ENCODE measurements at regions of chr3 and their contacts with region 1.

Region 1: DNA sequence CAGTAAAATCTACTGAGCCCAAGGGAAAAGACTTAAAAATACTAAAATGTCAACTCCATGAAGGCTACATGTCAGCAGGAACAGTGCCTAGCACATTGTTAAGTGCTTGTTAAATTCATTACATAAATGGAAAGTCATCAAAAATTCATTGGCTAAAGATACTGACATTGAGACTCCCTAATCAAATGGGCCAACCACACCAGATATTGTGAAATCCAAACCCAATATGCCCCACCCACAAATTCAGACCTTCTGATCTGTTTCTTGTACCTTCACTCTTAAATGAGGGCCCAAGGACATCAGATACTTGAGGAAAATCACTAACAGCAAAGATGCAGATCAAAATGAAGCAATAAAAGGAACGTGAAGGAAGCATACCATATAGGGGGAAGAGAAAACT is 20.7 kb downstream of the MRPS22 start:
- DNase-seq: no peak
- H3K4me3 ChIP-seq: no peak overlapping the region
- H3K27ac ChIP-seq: no peak overlapping the region
- H3K4me1 ChIP-seq: no peaks in the 10 kb centered on the region
- H3K27me3 ChIP-seq: no peaks in the 10 kb centered on the region
- CTCF ChIP-seq: no peak
- POLR2A ChIP-seq: no peak

Region 2: DNA sequence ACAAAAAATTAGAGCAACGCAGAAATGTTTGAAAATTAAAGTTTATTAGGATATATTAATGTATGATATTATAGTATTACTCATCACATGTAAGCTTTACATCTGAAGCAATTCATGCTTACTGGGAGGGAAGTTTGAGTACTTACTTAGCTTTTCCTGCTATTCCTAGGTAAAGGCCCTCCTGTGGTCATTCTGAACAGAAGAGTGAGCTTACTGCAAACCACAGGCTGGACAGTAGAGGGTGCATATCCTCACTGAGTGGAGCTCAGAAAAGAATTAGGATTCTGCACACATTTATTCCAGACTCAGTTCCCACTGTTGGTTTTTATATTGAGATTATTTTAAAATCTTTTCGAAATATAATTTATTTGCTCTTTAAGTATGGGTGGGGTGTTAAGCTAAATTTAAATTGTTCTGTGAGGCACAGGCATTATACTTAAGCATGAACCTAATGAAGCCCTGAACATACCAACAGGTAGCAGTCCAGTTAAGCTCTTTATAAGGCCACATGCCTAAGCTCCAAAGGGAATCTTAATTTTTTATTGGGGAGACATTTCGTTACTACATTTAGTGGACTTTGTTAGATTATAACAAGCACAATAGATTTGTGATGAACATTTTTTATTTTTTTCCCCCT is 10.5 kb before region 1 on chr3:
- CTCF ChIA-PET with region 1: interaction called, 31 read pairs
- POLR2A ChIA-PET with region 1: no interaction called
- dilution Hi-C with region 1: no loop called
- intact Hi-C with region 1: no loop called
- DNase-seq: peak; percentile 65
- H3K4me3 ChIP-seq: no peak overlapping the region
- H3K27ac ChIP-seq: no peak overlapping the region
- H3K4me1 ChIP-seq: no peaks in the 10 kb centered on the region
- H3K27me3 ChIP-seq: no peaks in the 10 kb centered on the region
- CTCF ChIP-seq: peak; percentile 69 to 77
- POLR2A ChIP-seq: no peak

Region 3: GRCh38 chr3:139378587-139379241 is 14.2 kb after region 1 on chr3:
- CTCF ChIA-PET with region 1: interaction called, 3 read pairs
- POLR2A ChIA-PET with region 1: no interaction called
- dilution Hi-C with region 1: no loop called
- intact Hi-C with region 1: loop called (anchors 2 kb)
- DNase-seq: no peak
- H3K4me3 ChIP-seq: no peak overlapping the region
- H3K27ac ChIP-seq: no peak overlapping the region
- H3K4me1 ChIP-seq: no peaks in the 10 kb centered on the region
- H3K27me3 ChIP-seq: no peaks in the 10 kb centered on the region
- CTCF ChIP-seq: no peak
- POLR2A ChIP-seq: no peak

Region 4: GRCh38 chr3:139953131-139953910 is 588.8 kb after region 1 on chr3:
- CTCF ChIA-PET with region 1: no interaction called
- POLR2A ChIA-PET with region 1: no interaction called
- dilution Hi-C with region 1: no loop called
- intact Hi-C with region 1: no loop called
- DNase-seq: no peak
- H3K4me3 ChIP-seq: no peak overlapping the region
- H3K27ac ChIP-seq: no peak overlapping the region
- H3K4me1 ChIP-seq: no peaks in the 10 kb centered on the region
- H3K27me3 ChIP-seq: no peaks in the 10 kb centered on the region
- CTCF ChIP-seq: no peak
- POLR2A ChIP-seq: no peak